Stomach (tissue), 19 donors: ENCODE measurements at regions of chr9 and their contacts with region 1.

Region 1: DNA sequence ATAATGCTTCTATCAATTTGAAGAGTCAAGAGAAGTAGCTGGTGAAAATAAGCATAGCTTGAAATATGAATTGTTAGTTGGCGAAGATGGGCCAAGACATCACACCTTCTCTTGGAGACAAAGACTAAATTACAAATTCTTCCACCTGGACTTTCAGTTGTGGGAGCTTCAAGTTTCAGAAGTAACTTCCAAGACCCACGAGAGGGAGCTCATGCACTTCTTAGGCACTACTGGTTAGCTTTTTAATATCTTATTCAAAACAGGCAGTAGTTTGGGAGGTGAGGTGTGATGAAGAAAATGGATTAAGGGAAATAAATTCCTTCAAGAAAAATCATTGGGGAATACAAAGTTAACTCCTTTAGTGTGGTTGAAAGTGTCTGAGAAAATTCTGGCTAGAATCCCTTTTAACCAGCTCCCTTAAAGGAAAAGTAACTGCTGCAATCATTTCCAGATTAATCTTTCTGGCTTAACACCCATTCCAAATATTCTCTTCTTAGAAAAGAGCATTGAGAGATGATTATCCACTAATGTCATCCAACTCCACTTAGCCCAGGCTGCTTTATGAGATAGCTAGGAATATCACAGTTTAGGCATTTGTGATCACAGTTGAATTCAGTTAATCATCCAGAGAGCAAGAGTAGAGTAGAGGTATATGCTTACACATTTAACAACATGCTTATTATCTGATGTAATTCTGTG is 139.5 kb upstream of the DMRTA1 start:
- DNase-seq: peak; percentile 29 to 81
- H3K4me3 ChIP-seq: no peak overlapping the region
- H3K27ac ChIP-seq: no peak overlapping the region
- H3K4me1 ChIP-seq: peaks cover 0 to 5% (median 0%) of the 10 kb centered on the region in 4 donors
- H3K27me3 ChIP-seq: peaks cover 0 to 7% (median 0%) of the 10 kb centered on the region in 3 donors
- CTCF ChIP-seq: peak in 5 of 7 experiments; percentile 16 to 62 (median 49)
- EP300 ChIP-seq: no peak
- POLR2A ChIP-seq: no peak

Region 2: GRCh38 chr9:22147813-22148524 is 159.2 kb before region 1 on chr9:
- intact Hi-C with region 1: no loop called
- DNase-seq: no peak
- H3K4me3 ChIP-seq: no peak overlapping the region
- H3K27ac ChIP-seq: no peak overlapping the region
- H3K4me1 ChIP-seq: peaks cover 0 to under 1% (median 0%) of the 10 kb centered on the region in 4 donors
- H3K27me3 ChIP-seq: no peaks in the 10 kb centered on the region
- CTCF ChIP-seq: no peak
- EP300 ChIP-seq: no peak
- POLR2A ChIP-seq: no peak

Region 3: DNA sequence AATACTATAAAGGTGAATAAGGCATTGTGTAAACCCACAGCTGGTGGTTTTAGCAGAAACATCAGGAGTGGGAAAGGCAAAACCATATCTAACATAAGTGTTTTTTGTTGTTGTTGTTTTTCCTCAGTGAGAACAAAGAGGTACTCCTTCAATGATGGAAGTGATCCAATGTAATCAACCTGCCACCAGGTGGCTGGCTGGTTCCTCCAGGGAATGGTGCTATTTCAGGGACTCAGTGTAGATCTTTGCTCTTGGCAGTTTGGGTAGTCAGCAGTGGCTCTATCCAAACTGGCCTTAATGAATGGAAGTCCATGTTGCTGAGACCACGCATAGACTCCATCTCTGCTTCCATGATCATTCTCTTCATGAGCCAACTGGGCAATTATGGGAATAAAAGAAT is 150.3 kb after region 1 on chr9:
- intact Hi-C with region 1: loop called (anchors 5 kb)
- DNase-seq: no peak
- H3K4me3 ChIP-seq: no peak overlapping the region
- H3K27ac ChIP-seq: no peak overlapping the region
- H3K4me1 ChIP-seq: peaks cover 0 to 3% (median 0%) of the 10 kb centered on the region in 4 donors
- H3K27me3 ChIP-seq: no peaks in the 10 kb centered on the region
- CTCF ChIP-seq: no peak
- EP300 ChIP-seq: no peak
- POLR2A ChIP-seq: no peak